BJ (cell line): ENCODE measurements at regions of chr18 and their contacts with region 1.

Region 1: GRCh38 chr18:74353169-74353775 is 37.6 kb downstream of the C18orf63 start:
- DNase-seq: no peak
- H3K4me3 ChIP-seq: no peak overlapping the region
- H3K27me3 ChIP-seq: peaks cover 2% of the 10 kb centered on the region; the same call in 1 of the 2 replicates
- CTCF ChIP-seq: peak; percentile 79

Region 2: DNA sequence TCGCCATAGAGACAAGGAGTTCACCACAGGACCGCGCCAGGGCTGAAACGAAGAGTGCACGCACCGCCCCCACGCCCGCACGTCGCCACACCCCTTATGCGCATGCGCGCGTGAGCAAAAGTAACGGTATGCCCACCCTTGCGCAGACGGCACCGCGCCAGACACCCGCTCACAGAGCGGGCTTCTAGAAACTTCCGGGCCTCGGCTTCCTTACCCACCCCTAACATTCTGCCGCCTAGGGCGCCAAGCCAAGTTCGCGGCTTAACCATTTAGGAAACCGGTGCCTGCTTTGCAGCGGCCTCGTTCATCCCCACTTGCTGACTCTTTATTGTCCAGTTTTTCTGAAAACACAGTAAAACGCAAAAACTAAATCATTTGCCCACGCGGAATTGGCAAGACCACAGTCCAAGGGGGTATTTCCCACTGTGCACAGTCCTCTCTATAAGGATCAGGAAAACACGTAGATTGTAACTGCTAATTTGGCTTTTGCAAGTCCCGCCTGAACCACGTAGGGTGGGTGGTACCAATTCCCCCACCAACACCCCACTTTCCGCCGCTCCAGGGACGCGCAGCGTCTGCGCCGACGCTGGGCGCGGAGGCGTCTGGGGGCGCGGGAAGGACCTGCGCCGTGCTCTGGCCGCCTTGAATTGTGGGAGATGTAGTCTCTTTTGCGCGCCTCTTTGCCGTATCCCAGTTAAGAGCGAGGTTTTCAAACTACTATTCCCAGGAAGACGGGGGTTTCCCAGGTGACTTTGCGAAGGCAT is 205.3 kb before region 1 on chr18 and contains the starts of genes FBXO15 and TIMM21:
- CTCF ChIA-PET with region 1: no interaction called
- POLR2A ChIA-PET with region 1: no interaction called
- DNase-seq: peak; percentile 90
- H3K4me3 ChIP-seq: peak within 1 kb of the TSS; percentile 85
- H3K27me3 ChIP-seq: no peaks in the 10 kb centered on the region
- CTCF ChIP-seq: no peak
- polyA plus RNA-seq, gene FBXO15: 0.75 and 0.82 TPM in 2 replicates
- polyA plus RNA-seq, gene TIMM21: 21.2 and 49.4 TPM in 2 replicates

Region 3: DNA sequence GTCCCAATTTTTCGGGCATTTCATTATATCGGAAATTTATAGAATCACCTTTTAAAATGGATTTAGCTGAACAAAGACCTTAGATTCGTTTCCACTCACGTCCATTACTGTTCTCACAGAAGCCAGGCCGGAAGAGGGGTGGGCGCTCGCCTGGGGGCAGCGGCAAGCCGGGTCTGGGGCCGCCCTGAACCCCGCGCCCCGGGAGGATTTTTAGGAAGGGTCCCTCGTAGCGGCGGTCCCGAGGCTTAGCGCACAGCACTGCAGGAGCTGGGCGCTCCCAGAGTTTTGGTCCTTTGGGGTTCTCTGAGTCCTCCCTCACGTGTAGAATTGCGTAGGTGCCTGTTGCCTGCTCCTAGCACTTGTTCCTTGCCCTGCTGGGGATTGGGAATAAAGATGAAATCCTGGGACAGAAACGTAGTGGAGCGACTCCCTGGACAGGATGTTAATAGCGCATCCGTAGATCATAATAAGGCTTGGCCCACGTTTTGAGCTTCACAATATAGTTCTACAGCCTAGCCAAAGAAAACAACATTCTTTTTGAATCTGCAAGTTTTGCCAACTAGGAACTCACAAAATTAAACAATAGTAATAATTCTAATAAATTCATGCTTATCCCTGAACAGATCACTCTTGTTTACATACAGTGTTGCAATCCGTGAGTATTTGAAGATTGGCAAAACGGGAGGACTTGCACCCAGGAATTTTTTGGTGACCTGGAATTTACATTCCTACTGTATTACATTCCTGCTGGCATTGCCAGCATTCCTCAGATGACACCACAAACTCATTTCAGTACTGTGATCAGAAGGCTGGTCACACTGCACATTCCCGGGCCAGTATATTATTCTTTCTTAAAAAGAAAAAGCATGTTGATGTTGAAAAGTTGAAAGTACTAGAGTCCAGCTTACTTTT is 36.8 kb before region 1 on chr18:
- CTCF ChIA-PET with region 1: no interaction called
- POLR2A ChIA-PET with region 1: no interaction called
- DNase-seq: peak; percentile 78
- H3K4me3 ChIP-seq: no peak overlapping the region
- H3K27me3 ChIP-seq: no peaks in the 10 kb centered on the region
- CTCF ChIP-seq: no peak

Region 4: DNA sequence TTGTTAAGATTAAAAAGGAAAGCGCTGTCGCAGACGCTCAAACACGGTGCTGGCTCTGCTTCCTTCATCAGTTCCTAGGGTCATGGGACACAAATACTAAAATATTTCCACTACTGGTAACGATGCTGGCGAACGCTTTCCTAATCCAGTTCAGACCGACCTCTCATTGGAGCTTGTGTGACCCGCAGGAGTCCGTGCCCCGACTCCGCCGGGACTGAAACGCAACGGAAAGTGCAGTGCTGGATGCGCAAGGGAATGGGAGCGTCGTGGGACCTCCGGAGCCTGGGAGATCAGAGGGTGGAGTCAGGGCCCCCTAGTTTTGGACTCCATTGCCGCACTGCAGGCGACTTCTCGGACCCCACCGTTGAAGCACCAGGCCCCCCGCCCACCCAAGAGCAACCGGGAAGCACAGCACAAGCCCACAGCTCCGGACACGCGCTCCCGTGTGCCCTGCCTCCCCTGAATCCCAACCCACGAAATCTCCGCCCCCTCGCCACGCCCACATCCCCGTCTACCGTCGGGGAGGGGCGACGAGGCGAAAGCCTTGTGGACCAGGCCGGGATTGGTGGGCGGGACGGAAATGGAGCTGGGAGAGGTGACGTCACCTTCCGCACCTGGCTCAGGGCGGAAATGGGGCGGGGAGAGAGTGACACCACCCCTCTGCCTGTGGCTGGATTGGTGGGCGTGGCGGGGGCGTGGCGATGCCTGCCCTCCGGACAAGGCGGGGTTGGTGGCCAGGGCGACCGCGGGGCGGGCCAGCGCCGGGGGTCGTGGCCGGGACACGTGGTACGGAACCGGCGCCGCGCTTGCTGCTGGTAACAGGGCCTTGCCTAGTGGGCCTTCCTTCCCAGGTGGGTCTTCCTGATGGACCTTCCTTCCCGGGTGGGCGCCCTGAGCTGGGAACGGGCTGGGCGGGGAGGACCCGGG is 142.6 kb after region 1 on chr18 and contains the start of gene CNDP2:
- CTCF ChIA-PET with region 1: interaction called, 24 read pairs
- POLR2A ChIA-PET with region 1: no interaction called
- DNase-seq: peak; percentile 92
- H3K4me3 ChIP-seq: peak within 1 kb of the TSS; percentile 85
- H3K27me3 ChIP-seq: peaks cover 9% of the 10 kb centered on the region
- CTCF ChIP-seq: no peak
- polyA plus RNA-seq, gene CNDP2: 86.6 and 99.4 TPM in 2 replicates

Region 5: DNA sequence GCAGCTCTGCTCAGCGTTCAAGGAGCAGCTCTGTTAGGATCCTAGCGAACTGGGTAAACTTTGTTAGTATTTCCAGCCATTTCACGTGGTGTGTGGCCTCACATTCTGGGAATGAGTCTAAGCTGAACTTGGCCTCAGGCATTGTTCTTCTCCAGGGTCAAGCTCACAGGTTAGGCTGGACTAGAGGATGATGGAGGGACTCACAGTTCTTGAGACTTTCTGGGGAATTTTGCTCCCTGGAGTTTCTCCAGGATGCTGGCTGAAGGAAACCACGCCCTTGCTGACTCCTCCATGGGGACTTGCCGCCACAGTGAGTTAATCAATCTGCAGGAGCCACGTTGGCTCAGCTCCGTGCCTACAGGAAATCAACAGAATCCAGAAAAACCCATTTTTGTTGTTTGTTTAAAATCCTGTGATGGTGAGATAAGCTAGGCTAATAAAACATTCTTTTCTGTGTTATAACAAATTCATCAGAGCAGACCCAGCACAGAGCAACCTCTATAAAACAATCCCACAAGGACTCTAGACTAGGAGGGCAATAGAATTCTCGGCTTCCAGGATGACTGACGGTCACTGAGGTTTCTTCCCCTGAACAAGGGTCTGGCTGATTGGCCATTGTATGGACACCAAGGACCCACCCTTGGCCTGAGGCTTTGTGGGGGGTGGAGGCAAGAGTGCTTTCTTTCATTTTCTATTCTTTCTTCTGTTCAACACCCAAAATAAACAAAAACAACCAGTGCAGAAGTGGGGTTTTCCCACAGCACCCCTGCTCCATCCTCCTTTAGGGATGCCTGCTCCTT is 193.7 kb after region 1 on chr18:
- CTCF ChIA-PET with region 1: interaction called, 94 read pairs
- POLR2A ChIA-PET with region 1: no interaction called
- DNase-seq: peak; percentile 28
- H3K4me3 ChIP-seq: no peak overlapping the region
- H3K27me3 ChIP-seq: peaks cover 1% of the 10 kb centered on the region; the same call in 1 of the 2 replicates
- CTCF ChIP-seq: no peak

Region 6: DNA sequence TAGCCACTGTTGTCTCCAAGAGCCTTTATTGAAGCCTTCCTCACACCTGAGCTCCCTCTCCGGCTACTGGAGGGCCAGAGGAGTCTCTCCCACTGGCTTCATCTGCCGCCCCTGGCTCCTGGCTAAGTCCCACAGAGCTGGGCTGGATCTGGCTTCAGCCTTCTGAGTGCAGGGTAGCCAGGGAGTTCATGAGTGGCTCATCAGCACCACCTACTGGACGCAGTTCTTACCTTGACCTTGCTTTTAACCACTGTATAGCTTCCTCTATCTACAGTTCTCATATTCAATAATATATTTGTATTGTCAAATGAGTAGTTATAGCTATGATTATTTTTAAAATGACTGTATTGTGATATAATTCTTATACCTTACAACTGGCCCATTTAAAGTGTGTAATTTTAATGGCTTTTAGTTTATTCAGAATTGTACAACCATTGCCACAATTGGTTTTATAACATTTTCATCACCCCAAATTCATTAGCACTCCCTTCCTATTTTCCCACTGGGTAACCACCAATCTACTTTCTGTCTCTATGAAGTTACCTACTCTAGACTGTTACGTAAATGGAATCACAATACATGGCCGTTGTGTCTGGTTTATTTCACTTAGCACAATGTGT is 198.8 kb after region 1 on chr18:
- CTCF ChIA-PET with region 1: interaction called, 94 read pairs
- POLR2A ChIA-PET with region 1: no interaction called
- DNase-seq: no peak
- H3K4me3 ChIP-seq: no peak overlapping the region
- H3K27me3 ChIP-seq: peaks cover 18% of the 10 kb centered on the region
- CTCF ChIP-seq: peak; percentile 85